Activated CD4-positive, alpha-beta memory T cell treated with anti-CD3 and anti-CD28 coated beads for 36 hours (primary cell): ENCODE measurements at regions of chr1 and their contacts with region 1.

Region 1: GRCh38 chr1:30801771-30802198 is 44.2 kb upstream of the LAPTM5 start:
- DNase-seq: peak; percentile 85
- H3K4me3 Mint-ChIP-seq: no peak overlapping the region
- H3K27ac Mint-ChIP-seq: no peak overlapping the region
- H3K4me1 Mint-ChIP-seq: peaks cover 4% of the 10 kb centered on the region
- H3K27me3 Mint-ChIP-seq: peaks cover 32% of the 10 kb centered on the region

Region 2: GRCh38 chr1:30779294-30780071 is 22.3 kb before region 1 on chr1:
- CTCF ChIA-PET with region 1: interaction called, 33 read pairs
- POLR2A ChIA-PET with region 1: no interaction called
- intact Hi-C with region 1: no loop called
- DNase-seq: peak; percentile 96
- H3K4me3 Mint-ChIP-seq: no peak overlapping the region
- H3K27ac Mint-ChIP-seq: no peak overlapping the region
- H3K4me1 Mint-ChIP-seq: peaks cover 5% of the 10 kb centered on the region
- H3K27me3 Mint-ChIP-seq: no peaks in the 10 kb centered on the region

Region 3: GRCh38 chr1:30823969-30824735 is 22.4 kb after region 1 on chr1:
- CTCF ChIA-PET with region 1: interaction called, 25 read pairs
- POLR2A ChIA-PET with region 1: no interaction called
- intact Hi-C with region 1: no loop called
- DNase-seq: peak; percentile 72
- H3K4me3 Mint-ChIP-seq: peak overlapping the region; percentile 58
- H3K27ac Mint-ChIP-seq: no peak overlapping the region
- H3K4me1 Mint-ChIP-seq: peaks cover 17% of the 10 kb centered on the region
- H3K27me3 Mint-ChIP-seq: peaks cover 51% of the 10 kb centered on the region

Region 4: GRCh38 chr1:30902182-30902581 is 100.4 kb after region 1 on chr1:
- CTCF ChIA-PET with region 1: interaction called, 24 read pairs
- POLR2A ChIA-PET with region 1: no interaction called
- intact Hi-C with region 1: no loop called
- DNase-seq: no peak
- H3K4me3 Mint-ChIP-seq: no peak overlapping the region
- H3K27ac Mint-ChIP-seq: no peak overlapping the region
- H3K4me1 Mint-ChIP-seq: peaks cover under 1% of the 10 kb centered on the region
- H3K27me3 Mint-ChIP-seq: peaks cover 9% of the 10 kb centered on the region

Region 5: GRCh38 chr1:30919025-30919881 is 117.5 kb after region 1 on chr1:
- CTCF ChIA-PET with region 1: interaction called, 227 read pairs
- POLR2A ChIA-PET with region 1: no interaction called
- intact Hi-C with region 1: no loop called
- DNase-seq: no peak
- H3K4me3 Mint-ChIP-seq: no peak overlapping the region
- H3K27ac Mint-ChIP-seq: no peak overlapping the region
- H3K4me1 Mint-ChIP-seq: peaks cover 5% of the 10 kb centered on the region
- H3K27me3 Mint-ChIP-seq: peaks cover 2% of the 10 kb centered on the region